Heart right ventricle (tissue), 16 donors: ENCODE measurements at regions of chr5 and their contacts with region 1.

Region 1: DNA sequence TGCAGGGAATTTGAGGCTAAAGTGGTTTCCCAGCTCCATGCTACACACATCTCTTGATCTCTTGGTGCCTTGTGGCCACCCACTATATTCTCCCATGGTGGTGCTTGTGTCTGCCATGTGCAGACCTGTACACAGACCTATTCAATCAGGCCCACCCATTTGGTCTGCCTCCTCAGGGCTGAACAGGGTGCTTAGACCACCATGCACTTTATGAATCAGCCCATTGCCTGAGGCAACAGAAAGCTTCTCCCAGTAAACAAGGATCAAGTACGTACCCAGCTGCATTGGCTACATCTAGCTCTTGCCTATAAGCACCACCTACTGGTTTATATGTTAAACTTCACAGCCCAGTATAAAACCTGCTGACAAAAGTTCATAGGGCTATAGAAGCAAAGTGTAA is 664.3 kb upstream of the EDIL3 start:
- DNase-seq: no peak
- ATAC-seq: peak in 6 of 8 donors; percentile 38 to 57 (median 48)
- H3K4me3 ChIP-seq: no peak overlapping the region
- H3K27ac ChIP-seq: no peak overlapping the region
- H3K4me1 ChIP-seq: no peaks in the 10 kb centered on the region
- H3K27me3 ChIP-seq: no peaks in the 10 kb centered on the region
- CTCF ChIP-seq: peak in 6 of 9 donors; percentile 31 to 45 (median 41)

Region 2: GRCh38 chr5:83927140-83927733 is 1121.8 kb before region 1 on chr5:
- intact Hi-C with region 1: loop called in 2 of 10 experiments (anchors 5 kb)
- DNase-seq: peak; percentile 16 to 40
- ATAC-seq: peak in 1 of 8 donors; percentile 33
- H3K4me3 ChIP-seq: no peak overlapping the region
- H3K27ac ChIP-seq: no peak overlapping the region
- H3K4me1 ChIP-seq: peaks cover 0 to 5% (median 0%) of the 10 kb centered on the region in 9 donors
- H3K27me3 ChIP-seq: no peaks in the 10 kb centered on the region
- CTCF ChIP-seq: peak; percentile 10 to 73 (median 63)

Region 3: GRCh38 chr5:84274585-84275468 is 774.2 kb before region 1 on chr5:
- intact Hi-C with region 1: loop called in 2 of 10 experiments (anchors 10 kb)
- DNase-seq: peak; percentile 10 to 12
- ATAC-seq: no peak
- H3K4me3 ChIP-seq: no peak overlapping the region
- H3K27ac ChIP-seq: no peak overlapping the region
- H3K4me1 ChIP-seq: peaks cover 0 to 7% (median 0%) of the 10 kb centered on the region in 9 donors
- H3K27me3 ChIP-seq: no peaks in the 10 kb centered on the region
- CTCF ChIP-seq: peak; percentile 11 to 62 (median 53)

Region 4: DNA sequence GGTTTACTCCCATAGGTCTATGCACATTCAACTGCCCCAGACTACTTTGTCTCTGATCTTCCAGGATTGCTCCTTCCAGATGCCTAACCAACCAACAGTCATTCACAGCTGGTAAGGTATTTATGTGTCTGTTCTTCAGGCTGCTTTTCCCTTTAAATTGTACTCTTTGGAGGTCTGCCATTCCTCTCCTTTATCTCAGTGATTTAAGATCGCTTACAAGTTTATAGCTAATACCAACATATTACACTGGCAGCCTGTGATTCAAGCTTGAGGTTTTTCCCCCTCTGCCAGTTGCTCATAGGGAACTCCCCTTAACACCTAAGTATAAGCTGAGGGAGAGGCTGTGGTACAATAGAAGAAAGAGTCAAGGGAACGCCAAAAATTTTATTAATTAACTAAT is 47.4 kb after region 1 on chr5:
- intact Hi-C with region 1: no loop called
- DNase-seq: no peak
- ATAC-seq: no peak
- H3K4me3 ChIP-seq: no peak overlapping the region
- H3K27ac ChIP-seq: no peak overlapping the region
- H3K4me1 ChIP-seq: no peaks in the 10 kb centered on the region
- H3K27me3 ChIP-seq: no peaks in the 10 kb centered on the region
- CTCF ChIP-seq: no peak